A549 (cell line): ENCODE measurements at regions of chr9 and their contacts with region 1.

Region 1: GRCh38 chr9:77841739-77842386 is 189.7 kb downstream of the GNAQ start:
- DNase-seq: peak in 1 of 2 experiments; percentile 24
- ATAC-seq: peak; percentile 17 to 36; a peak in 4 of 6 replicates
- H3K4me3 ChIP-seq: no peak overlapping the region
- H3K27ac ChIP-seq: peak overlapping the region; percentile 83 to 85
- H3K4me1 ChIP-seq: peaks cover 51% of the 10 kb centered on the region
- CTCF ChIP-seq: peak; percentile 64
- EP300 ChIP-seq: no peak
- POLR2A ChIP-seq: no peak
- RAD21 ChIP-seq: peak; percentile 40 to 67

Region 2: DNA sequence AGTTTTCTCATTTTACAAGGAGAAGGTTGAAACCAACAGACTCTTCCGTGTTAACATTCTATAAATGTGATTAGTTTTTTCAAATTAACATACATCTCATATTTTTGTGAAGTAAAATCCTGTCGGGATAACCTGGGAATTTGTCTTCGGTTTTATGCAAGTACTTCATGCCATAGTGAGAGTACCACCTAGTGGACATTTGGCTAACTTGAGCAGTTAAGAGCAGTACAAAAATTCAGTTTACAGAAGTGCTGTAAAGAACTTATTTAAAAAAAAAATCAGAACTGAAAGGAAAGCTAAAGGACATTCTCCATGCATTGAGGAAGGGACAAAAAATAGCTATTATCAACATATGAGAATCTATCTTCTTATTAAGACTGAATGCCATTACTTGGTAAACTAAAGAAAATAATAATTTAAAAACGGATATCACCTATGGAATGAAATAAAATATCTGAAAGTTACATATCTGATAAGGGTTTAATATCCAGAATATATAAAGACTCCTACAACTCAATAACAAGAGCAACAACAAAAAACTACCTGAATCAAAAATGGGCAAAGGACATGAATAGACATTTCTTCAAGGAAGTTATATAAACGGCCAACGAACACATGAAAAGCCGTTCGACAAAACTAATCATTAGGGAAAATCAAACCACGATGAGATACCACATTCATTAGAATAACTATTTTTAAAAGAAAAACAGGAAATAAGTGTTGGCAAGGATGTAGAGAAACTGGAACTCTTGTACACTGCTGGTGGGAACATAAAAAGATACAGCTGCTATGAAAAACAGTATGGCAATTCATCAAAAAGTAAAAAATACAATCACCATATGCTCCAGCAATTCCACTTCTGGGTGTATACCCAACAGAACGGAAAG is 76.7 kb before region 1 on chr9:
- CTCF ChIA-PET with region 1: interaction called, 10 read pairs
- POLR2A ChIA-PET with region 1: no interaction called
- DNase-seq: peak in 1 of 2 experiments; percentile 77
- ATAC-seq: peak in 1 of 2 experiments; percentile 81; a peak in 4 of 6 replicates
- H3K4me3 ChIP-seq: no peak overlapping the region
- H3K27ac ChIP-seq: no peak overlapping the region
- H3K4me1 ChIP-seq: peaks cover 13% of the 10 kb centered on the region
- CTCF ChIP-seq: peak; percentile 67
- EP300 ChIP-seq: no peak
- POLR2A ChIP-seq: no peak
- RAD21 ChIP-seq: peak; percentile 56 to 59

Region 3: DNA sequence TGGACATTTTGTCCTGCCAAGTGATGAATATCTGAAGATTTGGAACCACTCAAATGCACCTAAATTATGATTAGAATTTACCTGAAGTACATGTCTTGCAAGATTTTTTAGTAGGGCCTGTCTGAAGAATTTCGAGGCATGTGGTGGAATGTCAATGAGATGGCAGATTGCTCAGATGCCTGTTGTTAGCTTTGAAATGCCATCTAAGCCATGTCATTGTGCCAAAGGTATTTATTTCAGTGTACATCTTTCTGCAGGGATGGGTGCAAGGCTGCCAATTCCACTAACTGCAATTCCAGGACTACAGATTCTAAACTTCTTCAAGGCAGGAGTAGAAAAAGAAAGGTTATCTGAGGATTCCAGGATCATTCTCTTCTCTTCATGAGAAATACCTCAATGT is 198.9 kb after region 1 on chr9:
- CTCF ChIA-PET with region 1: interaction called, 28 read pairs
- POLR2A ChIA-PET with region 1: no interaction called
- DNase-seq: no peak
- ATAC-seq: no peak
- H3K4me3 ChIP-seq: no peak overlapping the region
- H3K27ac ChIP-seq: no peak overlapping the region
- H3K4me1 ChIP-seq: 0 out of 3 replicates have a peak, but pooled peaks cover 3% of the 10 kb centered on the region
- CTCF ChIP-seq: no peak
- EP300 ChIP-seq: no peak
- POLR2A ChIP-seq: no peak
- RAD21 ChIP-seq: no peak